ENCODE measurements at regions of chr12 and their contacts with region 1.

Region 1: GRCh38 chr12:7108796-7109571 is at the start of gene C1RL:
- DNase-seq: peak; percentile 96 to 98 (median 97)
- H3K4me3 ChIP-seq: peak within 1 kb of the TSS; percentile 70
- H3K27ac ChIP-seq: peak within 1 kb of the TSS; percentile 98 to 99
- H3K4me1 ChIP-seq: peaks cover 5% of the 10 kb centered on the region
- H3K27me3 ChIP-seq: no peaks in the 10 kb centered on the region
- CTCF ChIP-seq: peak; percentile 96 to 99 (median 98)
- EP300 ChIP-seq: peak; percentile 99
- POLR2A ChIP-seq: peak; percentile 83
- total RNA-seq, gene C1RL: 48.4 to 160 (median 116) TPM

Region 2: GRCh38 chr12:6921996-6922946 is 186.7 kb before region 1 on chr12:
- intact Hi-C with region 1: loop called in 1 of 4 experiments (anchors 5 kb)
- DNase-seq: peak in 1 of 5 donors; percentile 27
- H3K4me3 ChIP-seq: no peak overlapping the region
- H3K27ac ChIP-seq: no peak overlapping the region
- H3K4me1 ChIP-seq: peaks cover 15% of the 10 kb centered on the region
- H3K27me3 ChIP-seq: no peaks in the 10 kb centered on the region
- CTCF ChIP-seq: no peak
- EP300 ChIP-seq: no peak
- POLR2A ChIP-seq: no peak

Region 3: DNA sequence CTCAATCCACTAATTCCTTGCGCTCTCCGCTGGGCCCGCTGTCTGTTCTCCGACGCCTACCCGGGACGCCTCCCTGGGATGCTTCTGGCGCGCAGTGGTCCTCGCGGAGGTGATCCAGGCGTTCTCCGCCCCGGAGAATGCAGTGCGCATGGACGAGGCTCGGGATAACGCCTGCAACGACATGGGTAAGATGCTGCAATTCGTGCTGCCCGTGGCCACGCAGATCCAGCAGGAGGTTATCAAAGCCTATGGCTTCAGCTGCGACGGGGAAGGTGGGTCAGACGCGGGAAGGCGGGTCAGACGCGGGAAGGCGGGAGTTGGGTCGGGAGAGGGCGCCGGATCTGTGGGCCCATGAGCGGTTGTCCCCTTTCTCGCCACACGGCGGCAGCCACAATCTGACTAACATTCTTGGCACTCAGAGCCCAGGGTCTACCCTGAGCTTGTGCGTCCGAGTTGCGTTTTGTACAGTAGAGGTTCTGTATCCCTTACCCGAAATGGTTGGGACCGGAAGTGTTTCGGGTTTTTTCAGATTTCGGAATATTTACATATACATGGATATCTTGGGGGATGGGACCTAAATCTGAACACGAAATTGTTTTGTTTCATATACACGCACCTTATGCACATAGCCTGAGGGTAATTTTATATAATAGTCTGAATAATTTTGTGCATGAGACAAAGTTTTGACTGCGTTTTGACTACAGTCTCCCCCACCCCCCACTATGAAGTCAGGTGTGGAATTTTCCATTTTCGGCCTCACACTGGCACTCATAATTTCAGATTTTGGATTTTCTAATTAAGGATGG is 164.4 kb before region 1 on chr12:
- intact Hi-C with region 1: loop called in 3 of 4 experiments (anchors 5 kb)
- DNase-seq: peak; percentile 91 to 96 (median 94)
- H3K4me3 ChIP-seq: peak overlapping the region; percentile 60
- H3K27ac ChIP-seq: peak overlapping the region; percentile 68 to 94
- H3K4me1 ChIP-seq: peaks cover 12% of the 10 kb centered on the region
- H3K27me3 ChIP-seq: no peaks in the 10 kb centered on the region
- CTCF ChIP-seq: peak; percentile 77 to 97 (median 93)
- EP300 ChIP-seq: no peak
- POLR2A ChIP-seq: peak; percentile 70

Region 4: DNA sequence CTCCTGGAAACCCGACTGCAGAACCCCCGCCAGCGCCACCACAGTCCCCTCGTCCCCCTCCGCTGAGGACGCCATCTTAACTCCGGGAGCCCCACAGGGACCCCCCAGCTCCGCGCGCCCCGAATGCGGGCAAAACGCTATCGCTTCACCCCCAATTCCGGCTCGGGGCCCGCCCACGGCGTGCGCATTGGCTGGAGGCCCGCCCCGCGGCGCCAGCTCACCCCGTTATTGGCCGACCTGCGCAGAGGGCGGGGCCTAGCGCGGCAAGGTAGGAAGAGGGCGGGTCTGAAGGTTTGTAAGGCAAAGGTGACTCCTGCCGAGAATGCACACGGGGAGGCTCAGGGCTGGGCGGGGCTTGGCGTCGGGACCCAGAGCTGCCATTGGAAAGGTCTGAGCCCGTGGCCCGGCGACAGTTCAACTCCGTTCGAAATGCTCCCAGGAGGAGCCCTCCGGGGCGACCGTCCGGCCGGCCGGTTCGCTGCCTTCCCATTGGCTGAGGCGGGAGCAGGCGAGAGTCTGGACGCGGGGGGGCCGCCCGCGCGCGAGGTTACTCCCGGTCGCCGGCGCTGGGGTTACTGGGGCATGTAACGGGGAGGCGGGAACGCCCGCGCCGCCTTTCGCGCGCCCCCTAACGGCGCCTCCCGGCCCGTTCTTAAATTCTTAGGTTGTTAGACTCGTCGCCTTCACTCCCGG is 90.5 kb before region 1 on chr12 and contains the start of gene LPCAT3:
- intact Hi-C with region 1: loop called in 1 of 4 experiments (anchors 5 kb)
- DNase-seq: peak; percentile 97 to 99 (median 98)
- H3K4me3 ChIP-seq: peak within 1 kb of the TSS; percentile 81
- H3K27ac ChIP-seq: peak within 1 kb of the TSS; percentile 74 to 85
- H3K4me1 ChIP-seq: peaks cover 2% of the 10 kb centered on the region
- H3K27me3 ChIP-seq: no peaks in the 10 kb centered on the region
- CTCF ChIP-seq: peak; percentile 82 to 90 (median 90)
- EP300 ChIP-seq: peak; percentile 3
- POLR2A ChIP-seq: peak; percentile 78
- total RNA-seq, gene LPCAT3: 15.5 to 51.2 (median 39.5) TPM

Region 5: GRCh38 chr12:7060353-7060954 is 48.5 kb before region 1 on chr12 and contains the start of gene C1S:
- intact Hi-C with region 1: loop called (anchors 1 to 5 kb)
- DNase-seq: peak; percentile 80 to 92 (median 85)
- H3K4me3 ChIP-seq: peak within 1 kb of the TSS; percentile 48
- H3K27ac ChIP-seq: peak within 1 kb of the TSS; percentile 66 to 89
- H3K4me1 ChIP-seq: peaks cover 8% of the 10 kb centered on the region
- H3K27me3 ChIP-seq: no peaks in the 10 kb centered on the region
- CTCF ChIP-seq: peak; percentile 85 to 99 (median 98)
- EP300 ChIP-seq: peak; percentile 99
- POLR2A ChIP-seq: peak; percentile 90
- total RNA-seq, gene C1S: 499 to 1,495 (median 773) TPM

Region 6: GRCh38 chr12:7092229-7092985 is 16.6 kb before region 1 on chr12 and contains the start of gene C1R:
- intact Hi-C with region 1: loop called in 1 of 4 experiments (anchors 2 kb)
- DNase-seq: peak; percentile 88 to 95 (median 92)
- H3K4me3 ChIP-seq: peak within 1 kb of the TSS; percentile 64
- H3K27ac ChIP-seq: peak within 1 kb of the TSS; percentile 74 to 90
- H3K4me1 ChIP-seq: peaks cover 23% of the 10 kb centered on the region
- H3K27me3 ChIP-seq: no peaks in the 10 kb centered on the region
- CTCF ChIP-seq: peak; percentile 81 to 87 (median 85)
- EP300 ChIP-seq: peak; percentile 37
- POLR2A ChIP-seq: peak; percentile 84
- total RNA-seq, gene C1R: 472 to 1,524 (median 759) TPM